ENCODE measurements at regions of chr3 and their contacts with region 1.

Region 1: DNA sequence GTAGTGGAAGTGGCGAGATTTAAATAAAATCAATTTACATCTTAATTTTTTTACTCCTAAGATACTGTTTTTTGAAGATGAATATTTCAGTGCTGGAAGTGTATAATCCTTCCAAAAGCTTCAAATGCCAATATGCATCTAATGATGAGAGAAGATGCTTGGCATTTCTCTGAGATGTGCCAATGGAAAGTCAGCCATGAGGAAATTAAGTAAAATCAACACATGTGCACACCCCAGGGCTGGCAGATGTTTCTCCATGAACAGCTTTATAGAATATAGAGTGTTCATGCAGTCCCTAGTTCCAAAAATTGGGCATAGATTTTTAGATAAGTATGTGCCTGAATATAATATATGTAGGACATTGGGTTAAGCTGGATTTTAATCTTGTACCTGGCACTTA is 90.1 kb downstream of the CPNE4 start:
- DNase-seq: no peak

Region 2: GRCh38 chr3:131772269-131773026 is 172.2 kb before region 1 on chr3:
- intact Hi-C with region 1: loop called (anchors 10 kb)
- DNase-seq: no peak

Measured in cardiac septum (tissue), 1 donor.